CD8-positive, alpha-beta T cell (primary cell): ENCODE measurements at regions of chr6 and their contacts with region 1.

Region 1: GRCh38 chr6:31541658-31542521 is at the start of gene DDX39B:
- DNase-seq: peak; percentile 85 to 98 (median 93)
- ATAC-seq: peak; percentile 67
- H3K4me3 ChIP-seq: peak within 1 kb of the TSS; percentile 76 to 86
- H3K4me3 Mint-ChIP-seq: peak within 1 kb of the TSS; percentile 98
- H3K27ac ChIP-seq: peak within 1 kb of the TSS; percentile 95 to 96
- H3K27ac Mint-ChIP-seq: peak within 1 kb of the TSS; percentile 100
- H3K4me1 ChIP-seq: peaks cover 37% of the 10 kb centered on the region
- H3K4me1 Mint-ChIP-seq: peaks cover 56% of the 10 kb centered on the region
- H3K27me3 ChIP-seq: no peaks in the 10 kb centered on the region
- H3K27me3 Mint-ChIP-seq: no peaks in the 10 kb centered on the region
- CTCF ChIP-seq: no peak
- total RNA-seq, gene DDX39B: 483 to 518 TPM

Region 2: GRCh38 chr6:31403283-31403989 is 138.5 kb before region 1 on chr6 and contains the start of gene MICA:
- CTCF ChIA-PET with region 1: no interaction called
- POLR2A ChIA-PET with region 1: no interaction called
- intact Hi-C with region 1: loop called in 1 of 2 experiments (anchors 5 kb)
- DNase-seq: peak in 8 of 9 experiments; percentile 46 to 85 (median 70)
- ATAC-seq: peak; percentile 50
- H3K4me3 ChIP-seq: peak within 1 kb of the TSS; percentile 67
- H3K4me3 Mint-ChIP-seq: peak within 1 kb of the TSS; percentile 94
- H3K27ac ChIP-seq: peak within 1 kb of the TSS; percentile 18 to 85
- H3K27ac Mint-ChIP-seq: peak within 1 kb of the TSS; percentile 92
- H3K4me1 ChIP-seq: peaks cover 34% of the 10 kb centered on the region
- H3K4me1 Mint-ChIP-seq: peaks cover 69% of the 10 kb centered on the region
- H3K27me3 ChIP-seq: no peaks in the 10 kb centered on the region
- H3K27me3 Mint-ChIP-seq: no peaks in the 10 kb centered on the region
- CTCF ChIP-seq: no peak
- total RNA-seq, gene MICA: 5.8 to 6.2 TPM

Region 3: DNA sequence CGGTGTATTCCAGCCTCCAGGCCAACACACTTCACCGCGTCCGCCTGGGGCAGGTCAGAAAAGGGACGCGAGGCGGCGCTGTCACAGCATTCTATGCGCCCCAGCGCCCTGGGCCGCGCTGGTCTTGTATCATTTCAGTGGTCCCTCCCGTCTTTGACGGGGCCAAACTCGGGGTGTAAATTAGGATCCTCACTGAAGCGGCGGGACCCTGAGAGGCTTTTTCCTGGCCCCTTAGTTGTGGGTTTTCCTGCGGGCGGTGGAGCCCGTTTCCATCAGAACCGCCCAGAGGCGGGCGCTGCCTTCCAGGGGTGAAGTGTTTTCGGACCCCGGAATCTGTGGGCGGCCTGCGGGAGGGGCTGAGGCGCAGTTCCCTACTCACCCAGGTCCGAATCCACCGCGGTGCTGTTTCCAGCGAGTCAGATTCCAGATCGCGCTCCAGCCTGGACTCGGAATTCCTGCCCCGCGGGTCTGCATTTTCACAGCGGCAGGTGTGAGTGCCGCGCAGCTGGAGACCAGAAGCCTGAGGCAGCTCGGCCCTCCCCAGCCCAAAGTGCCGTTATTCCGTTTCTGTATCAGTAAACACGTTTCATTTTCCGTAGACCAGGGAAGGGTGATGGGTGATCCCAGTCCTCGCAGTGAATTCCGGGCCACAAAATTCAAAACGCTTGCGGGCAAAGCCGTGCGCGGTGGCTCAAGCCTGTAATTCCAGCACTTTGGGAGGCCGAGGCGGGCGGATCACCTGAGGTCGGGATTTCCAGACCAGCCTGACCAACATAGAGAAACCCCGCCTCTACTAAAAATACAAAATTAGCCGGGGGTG is 47.8 kb before region 1 on chr6:
- CTCF ChIA-PET with region 1: interaction called, 30 read pairs
- POLR2A ChIA-PET with region 1: interaction called, 41 read pairs
- intact Hi-C with region 1: loop called (anchors 1 kb)
- DNase-seq: peak; percentile 62 to 90 (median 76)
- ATAC-seq: peak; percentile 32
- H3K4me3 ChIP-seq: peak overlapping the region; percentile 65 to 81
- H3K4me3 Mint-ChIP-seq: peak overlapping the region; percentile 77
- H3K27ac ChIP-seq: peak overlapping the region; percentile 29 to 71
- H3K27ac Mint-ChIP-seq: peak overlapping the region; percentile 91
- H3K4me1 ChIP-seq: peaks cover 41% of the 10 kb centered on the region
- H3K4me1 Mint-ChIP-seq: peaks cover 49% of the 10 kb centered on the region
- H3K27me3 ChIP-seq: no peaks in the 10 kb centered on the region
- H3K27me3 Mint-ChIP-seq: no peaks in the 10 kb centered on the region
- CTCF ChIP-seq: peak; percentile 83

Region 4: DNA sequence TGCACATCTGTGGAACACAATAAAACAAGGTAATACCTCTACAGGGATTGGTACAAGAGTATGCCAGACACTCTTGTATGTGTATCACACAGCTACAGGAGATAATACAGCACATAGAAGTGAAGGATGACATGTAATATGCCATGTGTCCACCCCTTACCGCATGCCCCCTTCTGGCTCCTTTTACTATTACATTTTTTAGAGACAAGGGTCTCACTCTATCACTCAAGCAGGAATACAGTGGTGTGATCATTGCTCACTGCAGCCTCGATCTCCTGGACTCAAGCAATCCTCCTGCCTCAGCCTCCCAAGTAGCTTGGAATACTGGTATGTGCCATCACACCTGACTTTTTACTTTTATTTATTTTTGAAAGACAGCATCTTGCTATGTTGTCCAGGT is 55.1 kb after region 1 on chr6:
- CTCF ChIA-PET with region 1: interaction called, 660 read pairs
- POLR2A ChIA-PET with region 1: interaction called, 31 read pairs
- intact Hi-C with region 1: loop called (anchors 1 kb)
- DNase-seq: peak in 5 of 9 experiments; percentile 47 to 86 (median 56)
- ATAC-seq: peak; percentile 83
- H3K4me3 ChIP-seq: no peak overlapping the region
- H3K4me3 Mint-ChIP-seq: peak overlapping the region; percentile 3
- H3K27ac ChIP-seq: no peak overlapping the region
- H3K27ac Mint-ChIP-seq: peak overlapping the region; percentile 79
- H3K4me1 ChIP-seq: peaks cover 53% of the 10 kb centered on the region
- H3K4me1 Mint-ChIP-seq: peaks cover 50% of the 10 kb centered on the region
- H3K27me3 ChIP-seq: no peaks in the 10 kb centered on the region
- H3K27me3 Mint-ChIP-seq: no peaks in the 10 kb centered on the region
- CTCF ChIP-seq: peak; percentile 66

Region 5: DNA sequence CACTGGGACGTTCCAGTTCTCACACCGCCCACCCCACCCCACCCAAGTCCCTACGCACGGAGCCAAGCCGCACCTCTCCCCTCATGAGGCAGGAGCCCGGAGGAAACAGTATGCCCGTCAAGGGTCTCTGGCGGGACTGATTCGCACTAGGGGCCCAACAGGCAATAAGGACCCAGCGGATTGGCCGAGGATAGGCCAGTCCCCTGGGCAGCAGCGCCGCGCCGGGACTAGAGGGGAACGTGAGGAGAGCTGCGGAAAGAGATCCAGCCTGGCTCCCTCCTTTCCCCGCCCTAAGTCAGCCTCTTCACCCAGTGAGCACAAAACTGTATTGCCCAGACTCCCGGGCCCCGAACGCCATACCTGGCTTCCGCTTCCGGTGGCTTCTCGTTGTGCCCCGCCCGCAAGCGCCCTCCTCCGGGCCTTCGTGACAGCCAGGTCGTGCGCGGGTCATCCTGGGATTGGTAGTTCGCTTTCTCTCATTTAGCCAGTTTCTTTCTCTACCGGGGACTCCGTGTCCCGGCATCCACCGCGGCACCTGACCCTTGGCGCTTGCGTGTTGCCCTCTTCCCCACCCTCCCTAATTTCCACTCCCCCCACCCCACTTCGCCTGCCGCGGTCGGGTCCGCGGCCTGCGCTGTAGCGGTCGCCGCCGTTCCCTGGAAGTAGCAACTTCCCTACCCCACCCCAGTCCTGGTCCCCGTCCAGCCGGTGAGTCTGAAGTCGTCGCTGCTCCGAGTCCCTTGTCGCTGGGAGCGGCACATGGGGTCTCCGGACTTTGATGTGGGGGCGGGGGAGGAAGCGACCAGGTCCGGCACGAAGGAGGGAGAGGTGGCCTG is 123.8 kb after region 1 on chr6 and contains the start of gene CSNK2B:
- CTCF ChIA-PET with region 1: no interaction called
- POLR2A ChIA-PET with region 1: interaction called, 5 read pairs
- intact Hi-C with region 1: loop called (anchors 1 kb)
- DNase-seq: peak; percentile 95 to 99 (median 98)
- ATAC-seq: peak; percentile 84
- H3K4me3 ChIP-seq: peak within 1 kb of the TSS; percentile 91 to 94
- H3K4me3 Mint-ChIP-seq: peak within 1 kb of the TSS; percentile 95
- H3K27ac ChIP-seq: peak within 1 kb of the TSS; percentile 96 to 99
- H3K27ac Mint-ChIP-seq: peak within 1 kb of the TSS; percentile 98
- H3K4me1 ChIP-seq: peaks cover 44% of the 10 kb centered on the region
- H3K4me1 Mint-ChIP-seq: peaks cover 56% of the 10 kb centered on the region
- H3K27me3 ChIP-seq: no peaks in the 10 kb centered on the region
- H3K27me3 Mint-ChIP-seq: no peaks in the 10 kb centered on the region
- CTCF ChIP-seq: no peak
- total RNA-seq, gene CSNK2B: 80.9 to 86.1 TPM